ENCODE measurements at regions of chr20 and their contacts with region 1.

Region 1: GRCh38 chr20:45436732-45437391 is 20.9 kb downstream of the PIGT start:
- DNase-seq: peak; percentile 85
- ATAC-seq: peak; percentile 99
- H3K4me3 ChIP-seq: peak overlapping the region; percentile 68 to 82 (median 77)
- H3K27ac ChIP-seq: no peak overlapping the region
- H3K4me1 ChIP-seq: peaks cover 6% of the 10 kb centered on the region; the same call in 1 of the 2 replicates
- H3K27me3 ChIP-seq: no peaks in the 10 kb centered on the region
- CTCF ChIP-seq: peak; percentile 100
- EP300 ChIP-seq: peak in 1 of 2 experiments; percentile 8; a peak in 1 of 4 replicates
- POLR2A ChIP-seq: peak in 1 of 2 experiments; percentile 57; a peak in 2 of 4 replicates
- RAD21 ChIP-seq: peak; percentile 100

Region 2: GRCh38 chr20:45306431-45306982 is 130.4 kb before region 1 on chr20 and contains the start of gene RBPJL:
- CTCF ChIA-PET with region 1: interaction called, 11 read pairs
- POLR2A ChIA-PET with region 1: no interaction called
- in situ Hi-C with region 1: no loop called
- intact Hi-C with region 1: no loop called
- DNase-seq: no peak
- ATAC-seq: peak; percentile 69
- H3K4me3 ChIP-seq: peak within 1 kb of the TSS in 1 of 3 experiments; percentile 39; a peak in 1 of 6 replicates
- H3K27ac ChIP-seq: no peak within 1 kb of the TSS
- H3K4me1 ChIP-seq: 0 out of 2 replicates have a peak, but pooled peaks cover 4% of the 10 kb centered on the region
- H3K27me3 ChIP-seq: peaks cover 6 to 43% of the 10 kb centered on the region in 2 experiments; a peak in 4 of 5 replicates
- CTCF ChIP-seq: peak; percentile 98
- EP300 ChIP-seq: no peak
- POLR2A ChIP-seq: no peak
- RAD21 ChIP-seq: peak; percentile 57; the same call in 1 of the 2 replicates
- total RNA-seq, gene RBPJL: not detected in 2 replicates

Region 3: GRCh38 chr20:45347936-45348778 is 88.7 kb before region 1 on chr20 and contains the start of gene SDC4:
- CTCF ChIA-PET with region 1: no interaction called
- POLR2A ChIA-PET with region 1: interaction called, 44 read pairs
- in situ Hi-C with region 1: no loop called
- intact Hi-C with region 1: no loop called
- DNase-seq: no peak
- ATAC-seq: peak; percentile 55
- H3K4me3 ChIP-seq: peak within 1 kb of the TSS; percentile 79 to 87 (median 87)
- H3K27ac ChIP-seq: peak within 1 kb of the TSS; percentile 53
- H3K4me1 ChIP-seq: peaks cover 69% of the 10 kb centered on the region
- H3K27me3 ChIP-seq: peaks cover 1 to 11% of the 10 kb centered on the region in 2 experiments; a peak in 2 of 5 replicates
- CTCF ChIP-seq: no peak
- EP300 ChIP-seq: no peak
- POLR2A ChIP-seq: peak; percentile 96 to 99
- RAD21 ChIP-seq: peak; percentile 44; the same call in 1 of the 2 replicates
- total RNA-seq, gene SDC4: 36.0 and 65.1 TPM in 2 replicates

Region 4: GRCh38 chr20:45373353-45374100 is 63.3 kb before region 1 on chr20:
- CTCF ChIA-PET with region 1: interaction called, 32 read pairs
- POLR2A ChIA-PET with region 1: interaction called, 12 read pairs
- in situ Hi-C with region 1: loop called (anchors 5 kb)
- intact Hi-C with region 1: loop called (anchors 1 kb)
- DNase-seq: peak; percentile 83
- ATAC-seq: peak; percentile 91
- H3K4me3 ChIP-seq: peak overlapping the region in 2 of 3 experiments; percentile 12 to 29; a peak in 2 of 6 replicates
- H3K27ac ChIP-seq: no peak overlapping the region
- H3K4me1 ChIP-seq: peaks cover 19% of the 10 kb centered on the region
- H3K27me3 ChIP-seq: no peaks in the 10 kb centered on the region
- CTCF ChIP-seq: peak; percentile 98
- EP300 ChIP-seq: no peak
- POLR2A ChIP-seq: no peak
- RAD21 ChIP-seq: peak; percentile 92

Region 5: DNA sequence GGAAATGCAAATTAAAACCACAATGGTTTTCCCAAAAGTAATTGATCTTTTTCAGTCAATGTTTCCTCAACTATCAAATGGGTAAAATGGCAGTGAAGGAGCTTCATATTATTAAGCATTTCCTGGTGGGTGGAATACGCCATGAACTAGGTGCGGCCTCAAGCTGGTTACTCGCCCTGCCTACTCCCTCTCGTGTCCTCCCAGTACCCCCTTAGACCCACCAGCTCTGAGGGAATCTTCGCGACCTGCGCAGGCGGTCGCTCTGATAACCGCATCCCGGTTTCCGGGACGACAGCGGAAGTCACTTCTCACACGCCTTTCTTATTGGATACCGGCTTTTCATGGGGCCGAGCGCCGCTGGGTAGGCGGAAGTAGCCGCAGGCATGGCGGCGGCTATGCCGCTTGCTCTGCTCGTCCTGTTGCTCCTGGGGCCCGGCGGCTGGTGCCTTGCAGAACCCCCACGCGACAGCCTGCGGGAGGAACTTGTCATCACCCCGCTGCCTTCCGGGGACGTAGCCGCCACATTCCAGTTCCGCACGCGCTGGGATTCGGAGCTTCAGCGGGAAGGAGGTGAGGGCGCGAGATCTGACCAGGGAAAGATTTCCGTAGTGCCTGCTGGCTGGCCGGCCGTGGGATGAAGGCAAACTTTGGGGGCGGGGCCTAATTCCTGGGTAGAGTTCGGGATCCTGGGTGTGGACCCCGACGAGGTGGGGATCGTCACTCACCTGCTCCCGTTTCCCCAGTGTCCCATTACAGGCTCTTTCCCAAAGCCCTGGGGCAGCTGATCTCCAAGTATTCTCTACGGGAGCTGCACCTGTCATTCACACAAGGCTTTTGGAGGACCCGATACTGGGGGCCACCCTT is 20.9 kb before region 1 on chr20 and contains the start of gene PIGT:
- CTCF ChIA-PET with region 1: no interaction called
- POLR2A ChIA-PET with region 1: interaction called, 12 read pairs
- in situ Hi-C with region 1: no loop called
- intact Hi-C with region 1: no loop called
- DNase-seq: peak; percentile 93
- ATAC-seq: peak; percentile 99
- H3K4me3 ChIP-seq: peak within 1 kb of the TSS; percentile 84 to 97 (median 86)
- H3K27ac ChIP-seq: peak within 1 kb of the TSS; percentile 62
- H3K4me1 ChIP-seq: peaks cover 31% of the 10 kb centered on the region
- H3K27me3 ChIP-seq: no peaks in the 10 kb centered on the region; a peak in 1 of 5 replicates
- CTCF ChIP-seq: peak; percentile 38; the same call in 1 of the 2 replicates
- EP300 ChIP-seq: peak; percentile 40 to 46; a peak in 2 of 4 replicates
- POLR2A ChIP-seq: peak; percentile 93 to 98
- RAD21 ChIP-seq: peak; percentile 82
- total RNA-seq, gene PIGT: 26.4 and 65.9 TPM in 2 replicates

Region 6: GRCh38 chr20:45456632-45457031 is 19.8 kb after region 1 on chr20:
- CTCF ChIA-PET with region 1: no interaction called
- POLR2A ChIA-PET with region 1: no interaction called
- in situ Hi-C with region 1: no loop called
- intact Hi-C with region 1: no loop called
- DNase-seq: peak; percentile 70
- ATAC-seq: peak; percentile 89
- H3K4me3 ChIP-seq: no peak overlapping the region
- H3K27ac ChIP-seq: no peak overlapping the region
- H3K4me1 ChIP-seq: no peaks in the 10 kb centered on the region
- H3K27me3 ChIP-seq: no peaks in the 10 kb centered on the region; a peak in 1 of 5 replicates
- CTCF ChIP-seq: peak; percentile 65
- EP300 ChIP-seq: no peak
- POLR2A ChIP-seq: no peak
- RAD21 ChIP-seq: peak; percentile 59

Measured in HepG2 (cell line).